T-cell (primary cell): ENCODE measurements at regions of chr6 and their contacts with region 1.

Region 1: GRCh38 chr6:27864906-27865849 is 47.0 kb downstream of the OR2B2 start:
- DNase-seq: peak; percentile 30 to 95 (median 62)
- ATAC-seq: peak; percentile 78 to 85 (median 80)
- H3K4me3 ChIP-seq: peak overlapping the region; percentile 76 to 96
- H3K4me3 Mint-ChIP-seq: peak overlapping the region; percentile 98 to 99 (median 98)
- H3K27ac ChIP-seq: peak overlapping the region; percentile 78
- H3K27ac Mint-ChIP-seq: peak overlapping the region; percentile 89 to 96
- H3K4me1 ChIP-seq: peaks cover 14 to 38% of the 10 kb centered on the region in 2 experiments
- H3K4me1 Mint-ChIP-seq: peaks cover 43 to 48% (median 45%) of the 10 kb centered on the region in 3 donors
- H3K27me3 ChIP-seq: no peaks in the 10 kb centered on the region
- H3K27me3 Mint-ChIP-seq: no peaks in the 10 kb centered on the region

Region 2: DNA sequence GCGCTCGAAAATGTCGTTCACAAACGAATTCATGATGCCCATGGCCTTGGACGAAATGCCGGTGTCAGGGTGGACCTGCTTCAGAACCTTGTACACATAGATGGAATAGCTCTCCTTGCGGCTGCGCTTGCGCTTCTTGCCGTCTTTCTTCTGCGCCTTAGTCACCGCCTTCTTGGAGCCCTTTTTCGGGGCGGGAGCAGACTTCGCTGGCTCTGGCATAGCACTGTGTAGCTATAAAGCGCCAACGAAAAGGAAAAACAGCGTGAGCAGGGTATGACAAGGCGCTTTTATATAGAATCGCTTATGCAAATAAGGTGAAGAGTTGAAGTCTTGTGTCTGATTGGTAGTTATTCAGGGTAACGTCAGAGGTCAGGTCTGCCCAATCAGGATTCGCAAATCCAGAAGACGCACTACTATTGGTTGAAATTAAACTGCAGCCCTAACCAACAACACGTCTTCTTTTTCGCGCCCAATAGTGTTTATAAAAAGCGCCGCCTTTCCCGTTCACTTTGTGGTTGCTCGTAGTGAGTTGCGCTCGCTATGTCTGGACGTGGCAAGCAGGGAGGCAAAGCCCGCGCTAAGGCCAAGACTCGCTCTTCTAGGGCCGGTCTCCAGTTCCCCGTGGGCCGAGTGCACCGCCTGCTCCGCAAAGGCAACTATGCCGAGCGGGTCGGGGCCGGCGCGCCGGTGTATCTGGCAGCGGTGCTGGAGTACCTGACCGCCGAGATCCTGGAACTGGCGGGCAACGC is 732.5 kb before region 1 on chr6:
- CTCF ChIA-PET with region 1: no interaction called
- POLR2A ChIA-PET with region 1: interaction called, 4 to 10 read pairs
- DNase-seq: peak; percentile 76 to 98 (median 87)
- ATAC-seq: peak; percentile 80 to 87 (median 86)
- H3K4me3 ChIP-seq: peak overlapping the region; percentile 49 to 77
- H3K4me3 Mint-ChIP-seq: no peak overlapping the region
- H3K27ac ChIP-seq: peak overlapping the region; percentile 85
- H3K27ac Mint-ChIP-seq: no peak overlapping the region
- H3K4me1 ChIP-seq: peaks cover 17 to 34% of the 10 kb centered on the region in 2 experiments
- H3K4me1 Mint-ChIP-seq: peaks cover 22 to 30% (median 22%) of the 10 kb centered on the region in 3 donors
- H3K27me3 ChIP-seq: no peaks in the 10 kb centered on the region
- H3K27me3 Mint-ChIP-seq: no peaks in the 10 kb centered on the region

Region 3: GRCh38 chr6:27825025-27825793 is 40.0 kb before region 1 on chr6:
- CTCF ChIA-PET with region 1: interaction called in 1 of 2 experiments, 23 read pairs
- POLR2A ChIA-PET with region 1: interaction called, 5 to 32 read pairs
- DNase-seq: peak in 1 of 35 experiments; percentile 39
- ATAC-seq: no peak
- H3K4me3 ChIP-seq: peak overlapping the region; percentile 61 to 92
- H3K4me3 Mint-ChIP-seq: peak overlapping the region; percentile 80 to 90 (median 87)
- H3K27ac ChIP-seq: peak overlapping the region; percentile 89
- H3K27ac Mint-ChIP-seq: peak overlapping the region; percentile 89 to 96
- H3K4me1 ChIP-seq: peaks cover 6 to 12% of the 10 kb centered on the region in 2 experiments
- H3K4me1 Mint-ChIP-seq: peaks cover 36 to 39% (median 38%) of the 10 kb centered on the region in 3 donors
- H3K27me3 ChIP-seq: no peaks in the 10 kb centered on the region
- H3K27me3 Mint-ChIP-seq: no peaks in the 10 kb centered on the region

Region 4: GRCh38 chr6:27838058-27838944 is 26.9 kb before region 1 on chr6:
- CTCF ChIA-PET with region 1: interaction called, 4 to 112 read pairs
- POLR2A ChIA-PET with region 1: interaction called, 59 to 396 read pairs
- DNase-seq: peak; percentile 62 to 97 (median 79)
- ATAC-seq: peak; percentile 80 to 83 (median 82)
- H3K4me3 ChIP-seq: peak overlapping the region; percentile 86 to 87
- H3K4me3 Mint-ChIP-seq: no peak overlapping the region
- H3K27ac ChIP-seq: peak overlapping the region; percentile 99
- H3K27ac Mint-ChIP-seq: no peak overlapping the region
- H3K4me1 ChIP-seq: peaks cover 14 to 28% of the 10 kb centered on the region in 2 experiments
- H3K4me1 Mint-ChIP-seq: peaks cover 9 to 20% (median 9%) of the 10 kb centered on the region in 3 donors
- H3K27me3 ChIP-seq: peaks cover 0 to 8% of the 10 kb centered on the region in 2 experiments
- H3K27me3 Mint-ChIP-seq: peaks cover 4 to 7% of the 10 kb centered on the region in 2 donors

Region 5: DNA sequence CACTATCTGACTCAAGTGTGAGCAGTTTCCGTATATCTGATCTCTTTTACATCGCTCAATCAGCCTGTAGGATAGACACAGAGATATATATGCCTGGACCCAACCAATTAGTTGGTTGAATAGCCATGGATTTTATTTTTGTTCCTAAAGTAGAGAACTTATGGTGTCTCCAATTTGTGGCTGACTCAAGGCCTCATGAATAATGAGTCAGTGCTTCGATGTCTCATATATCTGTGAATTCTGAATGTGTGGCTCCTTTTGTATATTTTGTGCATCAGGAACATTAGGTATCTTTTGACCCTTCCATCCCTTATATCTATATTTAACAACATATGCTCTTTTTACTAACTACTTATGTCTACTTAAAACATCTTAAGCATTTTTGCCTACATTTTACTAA is 17.5 kb before region 1 on chr6:
- CTCF ChIA-PET with region 1: interaction called in 1 of 2 experiments, 3 read pairs
- POLR2A ChIA-PET with region 1: interaction called, 4 to 10 read pairs
- DNase-seq: no peak
- ATAC-seq: no peak
- H3K4me3 ChIP-seq: no peak overlapping the region
- H3K4me3 Mint-ChIP-seq: no peak overlapping the region
- H3K27ac ChIP-seq: no peak overlapping the region
- H3K27ac Mint-ChIP-seq: no peak overlapping the region
- H3K4me1 ChIP-seq: no peaks in the 10 kb centered on the region
- H3K4me1 Mint-ChIP-seq: no peaks in the 10 kb centered on the region
- H3K27me3 ChIP-seq: no peaks in the 10 kb centered on the region
- H3K27me3 Mint-ChIP-seq: peaks cover 0 to 8% of the 10 kb centered on the region in 2 donors

Region 6: DNA sequence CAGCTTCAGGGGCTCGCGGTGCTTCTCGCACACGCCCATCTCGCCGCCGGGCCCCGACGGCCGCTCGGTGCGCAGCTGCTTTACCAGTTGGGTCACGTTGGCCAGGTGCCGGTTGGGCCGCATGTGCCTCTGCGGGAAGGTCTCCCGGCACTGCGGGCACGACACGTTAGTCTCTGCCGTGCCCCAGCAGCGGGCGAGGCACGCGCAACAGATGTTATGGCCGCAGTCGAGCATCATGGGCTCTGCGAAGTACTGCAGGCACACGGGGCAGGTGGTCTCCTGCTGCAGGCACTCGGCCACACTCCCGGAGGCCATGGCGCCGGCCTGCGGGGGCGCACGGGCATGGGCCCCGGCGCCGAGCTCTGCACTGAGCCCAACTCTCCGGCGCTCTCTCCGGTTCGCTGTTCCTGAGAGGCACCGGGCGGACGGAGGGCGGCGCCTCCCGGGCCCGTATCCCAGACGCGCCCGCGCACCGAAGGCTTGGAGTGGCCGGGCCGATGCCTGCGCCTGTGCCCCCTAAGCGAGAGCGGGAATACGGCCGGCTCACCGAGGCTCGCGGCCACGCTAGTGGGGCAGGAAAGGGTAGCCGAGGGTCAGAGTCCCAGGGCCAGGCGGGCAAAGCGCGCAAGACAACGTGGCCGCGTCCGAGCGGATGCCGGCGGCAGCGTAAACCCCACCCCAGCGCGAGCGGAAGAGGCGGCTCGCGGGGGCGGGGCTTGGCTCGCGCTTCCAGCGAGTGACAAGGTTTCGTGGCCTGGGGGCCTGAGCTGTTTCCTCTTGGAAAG is 1058.3 kb after region 1 on chr6 and contains the start of gene TRIM27:
- CTCF ChIA-PET with region 1: no interaction called
- POLR2A ChIA-PET with region 1: interaction called in 1 of 2 experiments, 14 read pairs
- DNase-seq: peak; percentile 35 to 87 (median 68)
- ATAC-seq: peak; percentile 84 to 89 (median 86)
- H3K4me3 ChIP-seq: peak within 1 kb of the TSS; percentile 67 to 94
- H3K4me3 Mint-ChIP-seq: peak within 1 kb of the TSS; percentile 89 to 96 (median 93)
- H3K27ac ChIP-seq: peak within 1 kb of the TSS; percentile 82
- H3K27ac Mint-ChIP-seq: peak within 1 kb of the TSS; percentile 91 to 94
- H3K4me1 ChIP-seq: peaks cover 12 to 39% of the 10 kb centered on the region in 2 experiments
- H3K4me1 Mint-ChIP-seq: peaks cover 39 to 45% (median 44%) of the 10 kb centered on the region in 3 donors
- H3K27me3 ChIP-seq: no peaks in the 10 kb centered on the region
- H3K27me3 Mint-ChIP-seq: no peaks in the 10 kb centered on the region
- total RNA-seq, gene TRIM27: 27.2 to 91.7 (median 86.9) TPM